Heart right ventricle (tissue), 16 donors: ENCODE measurements at regions of chr11 and their contacts with region 1.

Region 1: DNA sequence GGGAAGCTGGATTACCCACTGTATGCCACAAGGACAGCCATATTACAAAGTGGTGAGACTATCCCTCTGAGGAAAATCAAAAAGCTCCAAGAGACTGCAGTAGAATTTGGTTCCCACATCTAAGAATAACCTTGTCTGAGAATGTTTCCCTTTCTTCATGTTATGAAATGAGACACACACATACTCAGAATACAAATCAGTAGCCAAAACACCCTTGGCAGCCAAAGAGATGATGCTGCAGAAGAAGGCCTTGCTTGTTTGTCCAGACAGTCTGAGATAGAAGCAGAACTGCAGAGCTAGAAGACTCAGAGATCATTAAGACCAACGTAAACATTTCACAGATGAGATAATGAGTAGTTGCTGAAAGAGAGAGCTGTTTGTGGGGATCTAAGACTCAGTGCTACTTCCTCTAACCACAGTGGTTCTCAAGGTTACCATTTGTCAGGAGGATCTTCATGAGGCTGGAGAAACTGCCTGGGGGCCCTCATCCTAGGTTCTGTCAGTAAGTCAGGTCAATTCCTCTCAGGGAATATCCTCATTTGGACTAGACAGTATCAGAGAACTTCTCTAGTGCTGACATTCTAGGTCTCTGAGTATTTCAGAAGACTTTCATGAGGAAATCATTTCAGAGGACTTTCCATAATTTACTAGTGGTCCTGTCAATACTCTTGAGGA is 38.9 kb downstream of the RELT start:
- DNase-seq: no peak
- ATAC-seq: peak; percentile 34 to 63 (median 48)
- H3K4me3 ChIP-seq: no peak overlapping the region
- H3K27ac ChIP-seq: peak overlapping the region in 8 of 10 donors; percentile 7 to 75 (median 46)
- H3K4me1 ChIP-seq: peaks cover 0 to 53% (median 26%) of the 10 kb centered on the region in 9 donors
- H3K27me3 ChIP-seq: no peaks in the 10 kb centered on the region
- CTCF ChIP-seq: no peak

Region 2: GRCh38 chr11:73469401-73469800 is 54.3 kb after region 1 on chr11:
- intact Hi-C with region 1: loop called in 1 of 10 experiments (anchors 5 kb)
- DNase-seq: no peak
- ATAC-seq: peak in 6 of 8 donors; percentile 20 to 74 (median 56)
- H3K4me3 ChIP-seq: no peak overlapping the region
- H3K27ac ChIP-seq: peak overlapping the region; percentile 17 to 70 (median 41)
- H3K4me1 ChIP-seq: peaks cover 10 to 60% (median 56%) of the 10 kb centered on the region in 9 donors
- H3K27me3 ChIP-seq: no peaks in the 10 kb centered on the region
- CTCF ChIP-seq: no peak